Activated CD4-positive, alpha-beta T cell treated with anti-CD3 and anti-CD28 coated beads, Interleukin-2, amount 10 ng/mL, durations not matched to agents 24 days and 14 days (primary cell): ENCODE measurements at regions of chr4 and their contacts with region 1.

Region 1: GRCh38 chr4:86497980-86498862 is 95.9 kb upstream of the PTPN13 start:
- DNase-seq: peak; percentile 67
- H3K4me3 Mint-ChIP-seq: no peak overlapping the region
- H3K27ac Mint-ChIP-seq: no peak overlapping the region
- H3K4me1 Mint-ChIP-seq: peaks cover 12% of the 10 kb centered on the region
- H3K27me3 Mint-ChIP-seq: peaks cover 22% of the 10 kb centered on the region

Region 2: GRCh38 chr4:86544310-86544966 is 46.2 kb after region 1 on chr4:
- intact Hi-C with region 1: loop called (anchors 1 kb)
- DNase-seq: peak; percentile 75
- H3K4me3 Mint-ChIP-seq: peak overlapping the region; percentile 53
- H3K27ac Mint-ChIP-seq: peak overlapping the region; percentile 78
- H3K4me1 Mint-ChIP-seq: peaks cover 31% of the 10 kb centered on the region
- H3K27me3 Mint-ChIP-seq: peaks cover 10% of the 10 kb centered on the region

Region 3: GRCh38 chr4:86593688-86594558 is 95.7 kb after region 1 on chr4 and contains the start of gene PTPN13:
- intact Hi-C with region 1: loop called (anchors 5 kb)
- DNase-seq: peak; percentile 82
- H3K4me3 Mint-ChIP-seq: peak within 1 kb of the TSS; percentile 81
- H3K27ac Mint-ChIP-seq: peak within 1 kb of the TSS; percentile 48
- H3K4me1 Mint-ChIP-seq: peaks cover 15% of the 10 kb centered on the region
- H3K27me3 Mint-ChIP-seq: peaks cover 51% of the 10 kb centered on the region
- total RNA-seq, gene PTPN13: 0.12 and 0.26 TPM in 2 replicates

Region 4: GRCh38 chr4:86895692-86896488 is 397.7 kb after region 1 on chr4:
- intact Hi-C with region 1: loop called (anchors 1 kb)
- DNase-seq: peak; percentile 78
- H3K4me3 Mint-ChIP-seq: no peak overlapping the region
- H3K27ac Mint-ChIP-seq: no peak overlapping the region
- H3K4me1 Mint-ChIP-seq: peaks cover 2% of the 10 kb centered on the region
- H3K27me3 Mint-ChIP-seq: peaks cover 15% of the 10 kb centered on the region

Region 5: GRCh38 chr4:87108142-87108546 is 609.9 kb after region 1 on chr4:
- intact Hi-C with region 1: loop called (anchors 10 kb)
- DNase-seq: no peak
- H3K4me3 Mint-ChIP-seq: no peak overlapping the region
- H3K27ac Mint-ChIP-seq: no peak overlapping the region
- H3K4me1 Mint-ChIP-seq: peaks cover 22% of the 10 kb centered on the region
- H3K27me3 Mint-ChIP-seq: no peaks in the 10 kb centered on the region